Psoas muscle (tissue), 8 donors: ENCODE measurements at regions of chr2 and their contacts with region 1.

Region 1: GRCh38 chr2:57546478-57546877 is 500.1 kb upstream of the VRK2 start:
- DNase-seq: no peak
- ATAC-seq: no peak
- H3K4me3 ChIP-seq: no peak overlapping the region
- H3K27ac ChIP-seq: no peak overlapping the region
- H3K4me1 ChIP-seq: no peaks in the 10 kb centered on the region
- H3K27me3 ChIP-seq: no peaks in the 10 kb centered on the region
- CTCF ChIP-seq: no peak

Region 2: DNA sequence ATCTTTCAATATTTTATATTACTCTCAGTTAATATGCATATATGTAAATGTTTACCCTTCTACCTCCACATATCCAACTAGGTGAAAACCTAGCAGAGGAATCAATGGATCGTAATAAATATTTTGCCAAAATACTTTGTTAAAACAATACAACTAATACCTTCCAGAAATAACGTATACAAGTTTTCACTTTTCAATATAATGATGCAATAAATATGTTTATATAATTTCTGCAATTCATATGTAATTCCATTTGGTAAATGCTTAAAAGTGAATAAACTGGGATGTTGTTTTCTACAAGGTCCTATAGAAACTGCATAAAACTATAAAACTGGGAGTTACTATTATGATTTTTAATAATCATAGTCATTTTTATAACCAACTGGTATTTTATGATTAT is 25.5 kb after region 1 on chr2:
- intact Hi-C with region 1: loop called in 1 of 2 experiments (anchors 2 kb)
- DNase-seq: no peak
- ATAC-seq: no peak
- H3K4me3 ChIP-seq: no peak overlapping the region
- H3K27ac ChIP-seq: no peak overlapping the region
- H3K4me1 ChIP-seq: no peaks in the 10 kb centered on the region
- H3K27me3 ChIP-seq: no peaks in the 10 kb centered on the region
- CTCF ChIP-seq: no peak